ENCODE measurements at regions of chr15 and their contacts with region 1.

Region 1: DNA sequence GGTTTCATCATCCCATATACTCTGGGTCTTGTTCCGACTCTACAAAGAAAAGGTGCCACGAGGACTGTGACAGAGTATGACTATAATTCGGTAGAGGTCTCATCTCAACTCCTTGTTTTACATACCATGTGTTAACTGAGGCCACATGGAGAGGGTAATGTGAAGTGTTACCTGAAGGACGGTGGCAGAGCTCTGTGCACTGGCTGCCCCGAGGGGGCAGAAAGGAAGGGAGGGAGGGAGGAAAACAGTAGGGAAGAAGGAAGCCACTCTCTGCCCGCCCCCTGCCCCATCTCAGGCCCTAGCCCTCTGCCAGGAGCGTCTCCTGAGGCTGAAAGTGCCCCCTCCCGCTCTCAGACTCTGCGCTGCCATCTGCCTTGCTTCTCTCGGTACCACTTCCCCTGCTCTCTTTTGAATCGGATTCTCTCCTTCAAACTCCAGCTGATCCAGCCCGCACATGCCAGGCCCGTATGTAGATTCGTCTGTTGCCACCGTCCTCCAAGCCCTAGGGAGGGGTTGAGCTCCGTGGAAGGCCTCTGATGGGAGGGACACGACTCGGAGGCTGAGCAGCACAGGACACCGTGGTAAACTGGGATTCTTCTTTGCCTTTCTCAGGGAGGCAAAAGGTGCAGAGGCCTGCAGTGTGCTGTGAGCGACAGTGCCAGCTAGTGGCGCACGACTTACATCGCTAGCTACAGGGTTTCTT is 70.5 kb upstream of the ATP10A start:
- DNase-seq: peak; percentile 5
- ATAC-seq: peak; percentile 96
- H3K4me3 ChIP-seq: no peak overlapping the region
- H3K27ac ChIP-seq: no peak overlapping the region
- H3K4me1 ChIP-seq: no peaks in the 10 kb centered on the region
- H3K27me3 ChIP-seq: no peaks in the 10 kb centered on the region
- CTCF ChIP-seq: peak; percentile 54 to 66 (median 65)
- EP300 ChIP-seq: no peak
- POLR2A ChIP-seq: no peak
- RAD21 ChIP-seq: peak; percentile 47

Region 2: DNA sequence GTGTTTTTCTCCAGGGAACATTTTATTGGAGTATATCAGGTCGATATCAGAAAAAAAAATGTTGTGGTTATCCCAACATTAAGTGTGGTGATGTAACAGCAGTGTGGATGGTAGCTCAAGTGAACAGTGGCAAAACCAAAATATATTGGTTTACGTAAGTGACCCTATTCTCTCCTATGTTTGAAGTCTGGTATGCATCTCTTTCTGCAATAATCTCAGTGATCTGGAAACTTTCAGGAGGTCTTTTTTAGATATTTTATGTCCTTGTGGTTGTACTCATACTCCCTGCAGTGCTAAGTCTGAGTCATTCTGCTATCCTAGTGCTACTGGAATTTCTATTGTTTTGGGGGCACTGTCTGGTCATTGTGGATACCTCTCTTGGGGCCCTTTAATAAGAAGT is 840.9 kb before region 1 on chr15:
- CTCF ChIA-PET with region 1: no interaction called
- POLR2A ChIA-PET with region 1: no interaction called
- RAD21 ChIA-PET with region 1: no interaction called
- SMC1A ChIA-PET with region 1: no interaction called
- in situ Hi-C with region 1: loop called (anchors 25 kb)
- intact Hi-C with region 1: no loop called
- DNase-seq: no peak
- ATAC-seq: no peak
- H3K4me3 ChIP-seq: no peak overlapping the region
- H3K27ac ChIP-seq: no peak overlapping the region
- H3K4me1 ChIP-seq: no peaks in the 10 kb centered on the region
- H3K27me3 ChIP-seq: no peaks in the 10 kb centered on the region
- CTCF ChIP-seq: no peak
- EP300 ChIP-seq: no peak
- POLR2A ChIP-seq: no peak
- RAD21 ChIP-seq: no peak

Region 3: DNA sequence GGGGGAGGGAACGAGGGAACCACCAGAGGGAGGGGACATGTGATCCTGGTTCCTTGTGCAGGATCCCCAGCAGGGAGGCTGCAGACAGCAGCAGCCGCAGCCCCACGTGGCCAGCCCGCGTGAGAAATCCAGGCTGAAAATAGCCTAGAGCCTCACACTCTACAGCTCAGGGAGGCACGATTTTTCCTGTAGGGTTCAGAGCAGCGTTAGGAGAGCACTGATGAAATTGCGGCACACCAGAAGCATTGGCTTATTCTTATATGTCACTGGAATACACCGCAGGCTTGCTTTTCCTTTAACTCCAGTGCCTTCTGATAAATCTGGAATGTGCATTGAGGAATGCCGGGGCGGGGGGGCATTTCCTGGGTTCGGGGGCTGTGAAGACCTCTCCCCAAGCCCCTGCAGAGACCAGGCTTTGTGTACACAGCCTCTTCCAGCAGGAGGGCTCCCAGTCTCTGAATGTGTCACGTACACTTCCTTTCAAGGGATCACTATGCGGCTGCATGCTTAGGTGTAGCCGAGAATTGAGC is 263.5 kb before region 1 on chr15:
- CTCF ChIA-PET with region 1: no interaction called
- POLR2A ChIA-PET with region 1: no interaction called
- RAD21 ChIA-PET with region 1: no interaction called
- SMC1A ChIA-PET with region 1: no interaction called
- in situ Hi-C with region 1: no loop called
- intact Hi-C with region 1: no loop called
- DNase-seq: no peak
- ATAC-seq: no peak
- H3K4me3 ChIP-seq: no peak overlapping the region
- H3K27ac ChIP-seq: no peak overlapping the region
- H3K4me1 ChIP-seq: no peaks in the 10 kb centered on the region
- H3K27me3 ChIP-seq: no peaks in the 10 kb centered on the region
- CTCF ChIP-seq: no peak
- EP300 ChIP-seq: no peak
- POLR2A ChIP-seq: no peak
- RAD21 ChIP-seq: no peak

Region 4: GRCh38 chr15:25693321-25694237 is 240.0 kb before region 1 on chr15:
- CTCF ChIA-PET with region 1: no interaction called
- POLR2A ChIA-PET with region 1: no interaction called
- RAD21 ChIA-PET with region 1: no interaction called
- SMC1A ChIA-PET with region 1: no interaction called
- in situ Hi-C with region 1: loop called (anchors 10 kb)
- intact Hi-C with region 1: loop called (anchors 5 kb)
- DNase-seq: no peak
- ATAC-seq: peak; percentile 80
- H3K4me3 ChIP-seq: no peak overlapping the region
- H3K27ac ChIP-seq: no peak overlapping the region
- H3K4me1 ChIP-seq: no peaks in the 10 kb centered on the region
- H3K27me3 ChIP-seq: no peaks in the 10 kb centered on the region
- CTCF ChIP-seq: peak; percentile 17 to 53 (median 51); a peak in 3 of 6 replicates
- EP300 ChIP-seq: no peak
- POLR2A ChIP-seq: no peak
- RAD21 ChIP-seq: peak; percentile 19; the same call in 1 of the 2 replicates

Region 5: DNA sequence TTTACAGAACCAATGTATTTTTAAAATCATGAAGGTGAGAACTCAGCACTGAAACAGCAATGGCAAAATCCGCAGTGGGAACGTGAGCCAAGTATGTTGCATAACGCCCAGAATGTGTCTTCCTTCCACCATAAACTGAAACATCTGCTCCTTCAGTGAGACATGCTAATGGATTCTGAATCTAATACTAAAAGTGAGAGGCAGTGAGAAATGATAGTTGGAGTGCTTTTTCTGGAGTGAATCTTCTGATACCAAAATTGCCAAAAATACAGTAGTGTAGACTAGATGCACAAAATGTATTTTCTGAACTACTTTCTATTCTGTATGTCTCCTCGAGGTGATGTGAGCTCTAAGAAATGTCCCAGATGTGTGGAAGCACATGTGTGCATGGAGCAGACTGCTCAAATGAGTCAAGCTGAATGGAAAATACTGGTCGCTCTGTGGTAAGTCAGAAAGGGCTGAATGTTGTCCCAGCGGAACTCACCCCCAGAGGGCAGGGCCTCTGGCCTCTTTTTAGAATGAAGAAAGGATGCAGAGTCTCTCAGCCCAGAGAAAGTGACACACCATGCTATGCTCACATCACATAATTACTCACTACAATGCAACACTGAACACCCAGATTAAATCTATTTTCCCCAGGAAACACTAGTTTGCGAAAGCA is 143.5 kb before region 1 on chr15:
- CTCF ChIA-PET with region 1: no interaction called
- POLR2A ChIA-PET with region 1: no interaction called
- RAD21 ChIA-PET with region 1: no interaction called
- SMC1A ChIA-PET with region 1: no interaction called
- in situ Hi-C with region 1: no loop called
- intact Hi-C with region 1: no loop called
- DNase-seq: no peak
- ATAC-seq: peak; percentile 27
- H3K4me3 ChIP-seq: no peak overlapping the region
- H3K27ac ChIP-seq: no peak overlapping the region
- H3K4me1 ChIP-seq: peaks cover 12% of the 10 kb centered on the region
- H3K27me3 ChIP-seq: no peaks in the 10 kb centered on the region
- CTCF ChIP-seq: no peak
- EP300 ChIP-seq: no peak
- POLR2A ChIP-seq: no peak
- RAD21 ChIP-seq: no peak

Region 6: DNA sequence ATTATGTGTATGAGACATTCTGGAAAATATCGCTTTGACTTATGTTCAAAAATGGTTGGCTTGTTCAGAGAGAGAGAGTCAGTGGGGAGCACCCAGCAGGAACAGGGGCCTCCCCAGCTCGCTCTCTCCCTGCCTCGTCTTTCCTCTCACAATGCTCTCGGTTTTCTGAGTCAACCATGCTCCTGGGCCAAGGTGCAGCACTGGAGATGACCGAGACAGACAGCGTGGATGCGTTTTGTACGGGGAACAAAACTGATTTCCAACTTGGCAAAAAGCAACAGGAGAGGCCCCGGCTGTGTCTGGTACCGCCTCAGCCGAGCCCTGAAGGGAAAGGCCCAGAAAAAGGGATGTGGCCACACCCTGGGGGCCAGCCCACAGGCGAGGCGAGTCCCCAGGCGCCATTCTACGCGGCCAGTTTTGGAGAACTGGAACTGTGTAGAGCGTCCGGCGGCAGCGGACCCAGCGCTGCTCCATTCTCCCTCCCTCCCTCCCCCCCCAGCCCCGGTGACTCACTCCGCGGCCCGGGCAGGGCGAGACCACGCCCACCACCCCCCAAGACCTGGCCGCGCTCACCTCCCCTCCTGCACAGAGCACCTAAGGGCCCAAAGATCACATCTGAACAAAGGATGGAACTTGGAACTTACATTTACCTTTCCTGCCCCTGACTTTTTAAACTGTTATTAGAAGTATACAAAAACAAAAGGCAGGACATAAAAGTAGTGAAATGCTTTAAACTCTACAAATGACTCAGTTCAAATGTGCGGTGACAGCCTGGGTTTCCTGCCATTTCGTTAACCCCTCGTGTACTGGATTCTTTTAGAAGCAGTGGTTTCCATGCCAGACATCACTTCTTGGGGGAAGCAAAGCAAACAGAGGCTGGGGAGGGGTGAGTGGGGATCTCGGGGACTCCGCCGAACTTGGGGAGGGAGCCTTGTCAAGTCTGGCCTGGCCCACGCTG is 83.2 kb before region 1 on chr15:
- CTCF ChIA-PET with region 1: interaction called, 3 read pairs
- POLR2A ChIA-PET with region 1: no interaction called
- RAD21 ChIA-PET with region 1: no interaction called
- SMC1A ChIA-PET with region 1: no interaction called
- in situ Hi-C with region 1: no loop called
- intact Hi-C with region 1: loop called (anchors 5 kb)
- DNase-seq: peak; percentile 28
- ATAC-seq: peak; percentile 94
- H3K4me3 ChIP-seq: peak overlapping the region; percentile 26; the same call in 1 of the 2 replicates
- H3K27ac ChIP-seq: peak overlapping the region; percentile 21; the same call in 1 of the 2 replicates
- H3K4me1 ChIP-seq: peaks cover 19% of the 10 kb centered on the region
- H3K27me3 ChIP-seq: no peaks in the 10 kb centered on the region
- CTCF ChIP-seq: no peak
- EP300 ChIP-seq: no peak; a peak in 1 of 4 replicates
- POLR2A ChIP-seq: 0 out of 2 replicates have a peak, but pooled peaks have one; percentile 11
- RAD21 ChIP-seq: no peak

Region 7: DNA sequence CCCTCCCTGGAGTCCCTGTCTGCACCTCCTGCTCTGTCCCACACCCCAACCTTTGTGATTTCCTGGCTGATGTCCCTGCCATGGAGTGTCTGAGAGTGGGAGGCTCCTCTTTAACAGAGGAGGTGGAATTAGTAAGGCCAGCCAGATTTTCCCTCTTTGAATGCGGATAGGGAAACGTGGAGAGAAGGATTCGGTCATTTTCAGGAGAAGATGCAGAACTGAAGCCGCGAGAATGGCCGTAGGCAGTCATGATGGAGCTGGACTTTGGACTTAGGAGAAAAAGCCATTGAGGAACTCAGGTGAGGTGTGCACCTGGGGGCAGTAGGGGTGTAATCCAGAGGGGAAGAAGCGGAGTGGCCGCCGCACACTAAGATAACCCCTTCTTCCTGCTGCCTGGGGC is 67.6 kb after region 1 on chr15:
- CTCF ChIA-PET with region 1: no interaction called
- POLR2A ChIA-PET with region 1: no interaction called
- RAD21 ChIA-PET with region 1: no interaction called
- SMC1A ChIA-PET with region 1: no interaction called
- in situ Hi-C with region 1: no loop called
- intact Hi-C with region 1: no loop called
- DNase-seq: no peak
- ATAC-seq: no peak
- H3K4me3 ChIP-seq: no peak overlapping the region
- H3K27ac ChIP-seq: no peak overlapping the region
- H3K4me1 ChIP-seq: no peaks in the 10 kb centered on the region
- H3K27me3 ChIP-seq: no peaks in the 10 kb centered on the region
- CTCF ChIP-seq: no peak
- EP300 ChIP-seq: no peak
- POLR2A ChIP-seq: no peak
- RAD21 ChIP-seq: no peak

Region 8: DNA sequence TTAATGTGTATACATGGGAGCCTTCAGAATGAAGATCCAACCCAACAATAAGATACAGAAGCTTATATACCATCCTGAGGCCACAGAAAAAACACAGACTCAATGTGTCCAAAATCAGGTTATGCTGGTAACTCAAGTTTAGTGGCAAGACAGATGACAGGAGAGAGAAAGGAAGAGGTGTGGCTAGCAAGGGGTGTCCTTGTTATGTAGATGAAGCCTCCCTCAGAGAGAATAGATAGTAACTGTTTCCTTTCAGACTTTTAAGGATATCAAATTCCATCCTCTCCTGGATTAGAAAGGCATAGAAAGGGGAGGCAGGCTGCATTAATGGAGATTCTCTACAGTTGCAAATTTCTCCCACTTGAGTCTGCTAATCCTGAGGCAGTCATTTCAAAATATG is 391.9 kb after region 1 on chr15:
- CTCF ChIA-PET with region 1: no interaction called
- POLR2A ChIA-PET with region 1: no interaction called
- RAD21 ChIA-PET with region 1: no interaction called
- SMC1A ChIA-PET with region 1: no interaction called
- in situ Hi-C with region 1: loop called (anchors 25 kb)
- intact Hi-C with region 1: no loop called
- DNase-seq: no peak
- ATAC-seq: no peak
- H3K4me3 ChIP-seq: no peak overlapping the region
- H3K27ac ChIP-seq: no peak overlapping the region
- H3K4me1 ChIP-seq: no peaks in the 10 kb centered on the region
- H3K27me3 ChIP-seq: no peaks in the 10 kb centered on the region
- CTCF ChIP-seq: no peak
- EP300 ChIP-seq: no peak
- POLR2A ChIP-seq: no peak
- RAD21 ChIP-seq: no peak

Measured in GM12878 (cell line).